Activated CD4-positive, alpha-beta T cell treated with anti-CD3 and anti-CD28 coated beads for 36 hours (primary cell): ENCODE measurements at regions of chr1 and their contacts with region 1.

Region 1: DNA sequence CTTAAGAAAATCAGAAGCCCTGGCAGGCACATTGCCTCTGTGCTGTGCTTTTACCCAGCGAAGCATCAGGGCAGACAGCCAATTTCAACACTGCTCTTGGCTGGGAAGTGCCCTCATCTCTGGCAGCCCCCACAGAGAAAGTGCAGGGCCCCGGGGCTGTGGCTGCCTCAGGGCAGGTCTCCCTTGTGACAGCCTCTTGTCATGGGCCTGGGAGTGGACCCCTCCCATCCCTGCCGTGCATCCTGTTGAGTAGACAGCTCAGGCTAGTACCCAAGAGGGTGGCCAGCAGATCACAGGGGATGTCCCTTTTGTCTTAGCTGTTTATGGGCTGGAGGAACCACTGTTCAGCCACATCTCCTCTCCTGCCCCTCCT is 23.3 kb downstream of the TTC34 start:
- DNase-seq: no peak
- ATAC-seq: no peak
- H3K4me3 Mint-ChIP-seq: no peak overlapping the region
- H3K27ac Mint-ChIP-seq: no peak overlapping the region
- H3K4me1 Mint-ChIP-seq: no peaks in the 10 kb centered on the region
- H3K27me3 Mint-ChIP-seq: peaks cover 21% of the 10 kb centered on the region

Region 2: GRCh38 chr1:2429780-2430591 is 348.2 kb before region 1 on chr1:
- CTCF ChIA-PET with region 1: no interaction called
- POLR2A ChIA-PET with region 1: no interaction called
- intact Hi-C with region 1: loop called in 1 of 2 experiments (anchors 5 kb)
- DNase-seq: peak; percentile 61
- ATAC-seq: peak; percentile 44
- H3K4me3 Mint-ChIP-seq: no peak overlapping the region
- H3K27ac Mint-ChIP-seq: no peak overlapping the region
- H3K4me1 Mint-ChIP-seq: no peaks in the 10 kb centered on the region
- H3K27me3 Mint-ChIP-seq: no peaks in the 10 kb centered on the region

Region 3: GRCh38 chr1:3024019-3024418 is 245.8 kb after region 1 on chr1:
- CTCF ChIA-PET with region 1: no interaction called
- POLR2A ChIA-PET with region 1: no interaction called
- intact Hi-C with region 1: no loop called
- DNase-seq: no peak
- ATAC-seq: no peak
- H3K4me3 Mint-ChIP-seq: no peak overlapping the region
- H3K27ac Mint-ChIP-seq: no peak overlapping the region
- H3K4me1 Mint-ChIP-seq: no peaks in the 10 kb centered on the region
- H3K27me3 Mint-ChIP-seq: no peaks in the 10 kb centered on the region